Transverse colon (tissue), 4 donors: ENCODE measurements at regions of chr20 and their contacts with region 1.

Region 1: DNA sequence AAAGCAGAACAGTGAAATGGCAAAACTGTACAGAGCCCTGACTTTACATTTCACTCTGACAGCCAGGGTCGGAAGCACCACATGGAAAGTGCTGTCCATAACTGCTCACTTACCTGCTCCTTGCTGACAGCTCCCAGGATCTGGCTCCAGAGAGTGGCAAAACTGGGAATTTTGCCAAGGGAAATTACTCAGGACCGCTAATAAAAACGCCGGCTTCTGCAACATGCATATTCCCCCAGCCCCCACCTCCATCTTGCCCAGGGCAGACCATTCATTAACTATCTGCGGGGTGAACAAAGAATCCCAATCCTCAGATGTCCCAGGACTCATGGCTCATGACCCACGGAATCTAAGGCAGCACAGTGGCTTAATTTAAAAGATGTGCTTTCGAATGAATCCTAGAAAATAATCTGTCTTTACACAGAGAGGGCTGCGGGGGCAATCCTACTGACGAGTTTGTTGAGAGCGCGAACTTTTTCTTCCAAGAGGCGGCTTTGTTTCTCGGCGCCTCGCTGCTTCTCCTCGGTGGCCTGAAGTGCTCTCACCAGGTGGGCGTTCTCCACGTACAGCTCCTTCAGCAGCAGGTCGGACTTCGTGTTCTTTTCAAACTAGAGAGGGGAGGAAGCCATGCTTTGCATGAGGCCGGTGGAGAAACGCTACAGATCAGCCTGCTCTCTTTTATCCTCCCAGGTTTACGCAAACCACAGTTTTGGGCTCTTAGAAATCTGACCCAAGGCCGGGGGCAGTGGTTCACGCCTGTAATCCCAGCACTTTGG is 45.8 kb downstream of the GINS1 start:
- DNase-seq: no peak
- H3K4me3 ChIP-seq: no peak overlapping the region
- H3K27ac ChIP-seq: no peak overlapping the region
- H3K4me1 ChIP-seq: no peaks in the 10 kb centered on the region
- H3K27me3 ChIP-seq: no peaks in the 10 kb centered on the region
- CTCF ChIP-seq: no peak
- EP300 ChIP-seq: no peak
- POLR2A ChIP-seq: no peak

Region 2: GRCh38 chr20:25025986-25026605 is 427.1 kb before region 1 on chr20:
- in situ Hi-C with region 1: no loop called
- intact Hi-C with region 1: loop called (anchors 5 kb)
- DNase-seq: peak; percentile 5
- H3K4me3 ChIP-seq: no peak overlapping the region
- H3K27ac ChIP-seq: no peak overlapping the region
- H3K4me1 ChIP-seq: peaks cover 0 to 11% (median 4%) of the 10 kb centered on the region in 4 donors
- H3K27me3 ChIP-seq: no peaks in the 10 kb centered on the region
- CTCF ChIP-seq: no peak
- EP300 ChIP-seq: no peak
- POLR2A ChIP-seq: no peak

Region 3: DNA sequence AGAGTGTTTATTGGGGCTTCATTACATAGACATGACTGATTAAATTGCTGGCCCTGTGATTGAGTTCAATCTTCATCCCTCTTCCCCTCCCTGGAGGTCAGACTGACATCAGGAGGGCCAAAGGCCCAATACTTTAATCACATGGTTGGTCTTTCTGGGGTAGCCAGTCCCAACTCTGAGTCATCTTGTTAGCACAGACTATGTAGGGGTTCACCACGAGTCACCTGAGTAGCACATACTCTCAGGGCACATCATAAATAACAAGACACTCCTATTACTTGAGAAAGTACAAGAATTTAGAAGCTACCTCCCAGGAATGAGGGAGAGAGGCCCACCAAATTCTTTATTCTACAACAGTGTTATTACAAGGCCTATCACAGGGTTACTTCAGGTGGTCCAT is 34.4 kb before region 1 on chr20:
- in situ Hi-C with region 1: no loop called
- intact Hi-C with region 1: no loop called
- DNase-seq: no peak
- H3K4me3 ChIP-seq: no peak overlapping the region
- H3K27ac ChIP-seq: no peak overlapping the region
- H3K4me1 ChIP-seq: no peaks in the 10 kb centered on the region
- H3K27me3 ChIP-seq: no peaks in the 10 kb centered on the region
- CTCF ChIP-seq: no peak
- EP300 ChIP-seq: no peak
- POLR2A ChIP-seq: no peak